ENCODE measurements at regions of chr11 and their contacts with region 1.

Region 1: GRCh38 chr11:62726915-62727763 is at the start of gene HNRNPUL2:
- DNase-seq: peak; percentile 100
- H3K4me3 ChIP-seq: peak within 1 kb of the TSS; percentile 97
- H3K27ac ChIP-seq: peak within 1 kb of the TSS; percentile 93
- H3K4me1 ChIP-seq: peaks cover 28% of the 10 kb centered on the region
- CTCF ChIP-seq: no peak
- total RNA-seq, gene HNRNPUL2: 8.3 and 19.2 TPM in 2 replicates

Region 2: GRCh38 chr11:62665075-62665598 is 62.0 kb before region 1 on chr11 and contains the starts of genes C11orf98 and CSKMT:
- CTCF ChIA-PET with region 1: interaction called, 4 read pairs
- POLR2A ChIA-PET with region 1: interaction called, 15 read pairs
- intact Hi-C with region 1: loop called (anchors 5 kb)
- DNase-seq: peak; percentile 94
- H3K4me3 ChIP-seq: peak within 1 kb of the TSS; percentile 86
- H3K27ac ChIP-seq: peak within 1 kb of the TSS; percentile 94
- H3K4me1 ChIP-seq: peaks cover 40% of the 10 kb centered on the region
- CTCF ChIP-seq: no peak
- total RNA-seq, gene C11orf98: 148 and 194 TPM in 2 replicates
- total RNA-seq, gene CSKMT: 88.4 and 90.8 TPM in 2 replicates

Region 3: DNA sequence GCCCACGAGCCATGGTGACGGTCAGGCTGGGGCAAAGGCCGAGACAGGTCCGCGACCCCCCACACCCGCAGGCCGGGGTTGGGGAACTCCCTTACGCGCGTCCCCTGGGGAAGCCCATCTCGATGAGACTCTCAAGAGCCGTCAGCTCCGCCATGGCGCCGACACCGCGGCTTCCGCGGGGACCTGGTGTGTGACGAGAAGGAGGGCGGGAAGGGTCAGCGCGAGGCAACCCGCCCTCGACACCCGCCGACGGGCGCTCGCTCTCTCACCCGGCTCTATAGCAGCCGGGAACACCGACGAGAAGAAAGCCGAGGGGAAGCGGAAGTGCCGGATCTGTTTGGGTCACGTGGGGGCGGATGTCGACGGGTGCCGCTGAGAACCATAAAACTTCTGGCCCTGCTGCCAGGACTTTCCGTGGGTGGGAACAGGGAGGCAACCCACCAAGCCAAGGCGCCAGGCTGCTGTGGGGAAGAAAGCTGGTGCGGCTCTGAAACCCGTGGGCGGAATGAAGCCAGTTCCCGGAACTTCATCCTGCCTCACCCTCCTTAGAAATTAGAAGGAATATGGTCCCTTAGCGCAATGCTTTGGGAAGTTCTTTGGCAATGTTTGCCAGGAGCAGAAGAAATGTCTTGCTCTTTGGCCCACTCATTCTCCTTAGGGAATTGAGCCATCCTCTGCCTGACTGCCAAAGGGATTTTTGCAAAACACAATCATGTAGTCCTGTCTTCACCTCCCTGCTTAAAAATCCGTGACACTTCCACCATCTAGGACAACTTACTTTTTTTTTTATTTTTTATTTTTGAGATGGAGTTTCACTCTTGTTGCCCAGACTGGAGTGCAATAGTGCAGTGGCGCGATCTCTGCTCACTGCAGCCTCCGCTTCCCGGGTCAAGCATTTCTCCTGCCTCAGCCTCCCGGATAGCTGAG is 48.1 kb before region 1 on chr11 and contains the start of gene UBXN1:
- CTCF ChIA-PET with region 1: no interaction called
- POLR2A ChIA-PET with region 1: interaction called, 10 read pairs
- intact Hi-C with region 1: loop called (anchors 2 kb)
- DNase-seq: peak; percentile 87
- H3K4me3 ChIP-seq: peak within 1 kb of the TSS; percentile 93
- H3K27ac ChIP-seq: peak within 1 kb of the TSS; percentile 57
- H3K4me1 ChIP-seq: peaks cover 35% of the 10 kb centered on the region
- CTCF ChIP-seq: no peak
- total RNA-seq, gene UBXN1: 101 and 123 TPM in 2 replicates

Region 4: DNA sequence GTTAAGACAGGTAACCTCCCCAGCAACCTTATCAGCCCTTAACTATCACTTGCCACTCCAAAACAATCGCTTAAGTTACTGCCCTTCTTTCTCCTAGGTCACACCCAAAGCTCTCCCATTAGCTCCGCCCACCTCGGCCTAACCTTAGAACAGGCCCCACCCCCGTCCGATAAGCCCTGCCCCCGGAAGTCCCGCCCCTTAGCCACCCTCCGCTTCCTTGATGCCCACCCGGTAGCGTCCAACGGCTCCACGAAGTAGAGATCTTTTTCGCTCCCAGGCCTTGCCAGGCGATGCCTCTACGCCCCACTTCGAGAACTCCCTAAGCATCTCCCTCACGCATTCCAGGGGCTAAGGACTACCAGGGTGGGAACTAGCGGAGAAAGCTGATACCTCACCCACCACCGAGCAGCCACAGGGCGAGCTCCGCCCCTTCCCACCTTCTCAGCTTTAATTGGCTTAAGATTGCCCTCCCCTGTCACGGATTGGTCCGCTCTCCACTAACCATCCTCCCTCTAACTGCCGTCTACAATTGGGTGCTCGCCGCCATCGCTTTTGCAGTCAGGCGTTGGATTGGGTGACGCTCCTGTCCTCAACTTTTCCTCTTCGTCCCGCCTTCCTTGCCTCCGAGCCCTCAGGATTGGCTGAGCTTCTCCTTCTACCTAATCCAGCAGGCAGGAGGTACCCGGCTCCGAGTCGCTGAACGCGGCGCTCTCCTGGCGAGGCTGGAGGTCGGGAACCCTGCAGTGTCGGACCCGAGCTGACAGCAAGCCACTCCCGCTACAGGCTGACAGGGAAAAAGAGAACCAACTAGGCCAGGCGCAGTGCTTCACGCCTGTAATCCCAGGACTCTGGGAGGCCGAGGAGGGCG is 26.8 kb after region 1 on chr11 and contains the start of gene ZBTB3:
- CTCF ChIA-PET with region 1: interaction called, 5 read pairs
- POLR2A ChIA-PET with region 1: interaction called, 11 read pairs
- intact Hi-C with region 1: no loop called
- DNase-seq: peak; percentile 99
- H3K4me3 ChIP-seq: peak within 1 kb of the TSS; percentile 71
- H3K27ac ChIP-seq: peak within 1 kb of the TSS; percentile 60
- H3K4me1 ChIP-seq: peaks cover 20% of the 10 kb centered on the region
- CTCF ChIP-seq: no peak
- total RNA-seq, gene ZBTB3: 11.1 and 11.8 TPM in 2 replicates

Region 5: GRCh38 chr11:62787005-62787759 is 60.0 kb after region 1 on chr11 and contains the start of gene TMEM179B:
- CTCF ChIA-PET with region 1: no interaction called
- POLR2A ChIA-PET with region 1: no interaction called
- intact Hi-C with region 1: loop called (anchors 2 kb)
- DNase-seq: peak; percentile 99
- H3K4me3 ChIP-seq: peak within 1 kb of the TSS; percentile 97
- H3K27ac ChIP-seq: peak within 1 kb of the TSS; percentile 79
- H3K4me1 ChIP-seq: peaks cover 37% of the 10 kb centered on the region
- CTCF ChIP-seq: peak; percentile 33; the same call in 1 of the 2 replicates
- total RNA-seq, gene TMEM179B: 22.8 and 33.1 TPM in 2 replicates

Region 6: GRCh38 chr11:62860835-62861563 is 133.9 kb after region 1 on chr11:
- CTCF ChIA-PET with region 1: interaction called, 3 read pairs
- POLR2A ChIA-PET with region 1: interaction called, 6 read pairs
- intact Hi-C with region 1: loop called (anchors 2 kb)
- DNase-seq: no peak
- H3K4me3 ChIP-seq: peak overlapping the region; percentile 94
- H3K27ac ChIP-seq: peak overlapping the region; percentile 66
- H3K4me1 ChIP-seq: peaks cover 49% of the 10 kb centered on the region
- CTCF ChIP-seq: no peak

Measured in OCI-LY7 (cell line).